ENCODE measurements at regions of chr1 and their contacts with region 1.

Region 1: DNA sequence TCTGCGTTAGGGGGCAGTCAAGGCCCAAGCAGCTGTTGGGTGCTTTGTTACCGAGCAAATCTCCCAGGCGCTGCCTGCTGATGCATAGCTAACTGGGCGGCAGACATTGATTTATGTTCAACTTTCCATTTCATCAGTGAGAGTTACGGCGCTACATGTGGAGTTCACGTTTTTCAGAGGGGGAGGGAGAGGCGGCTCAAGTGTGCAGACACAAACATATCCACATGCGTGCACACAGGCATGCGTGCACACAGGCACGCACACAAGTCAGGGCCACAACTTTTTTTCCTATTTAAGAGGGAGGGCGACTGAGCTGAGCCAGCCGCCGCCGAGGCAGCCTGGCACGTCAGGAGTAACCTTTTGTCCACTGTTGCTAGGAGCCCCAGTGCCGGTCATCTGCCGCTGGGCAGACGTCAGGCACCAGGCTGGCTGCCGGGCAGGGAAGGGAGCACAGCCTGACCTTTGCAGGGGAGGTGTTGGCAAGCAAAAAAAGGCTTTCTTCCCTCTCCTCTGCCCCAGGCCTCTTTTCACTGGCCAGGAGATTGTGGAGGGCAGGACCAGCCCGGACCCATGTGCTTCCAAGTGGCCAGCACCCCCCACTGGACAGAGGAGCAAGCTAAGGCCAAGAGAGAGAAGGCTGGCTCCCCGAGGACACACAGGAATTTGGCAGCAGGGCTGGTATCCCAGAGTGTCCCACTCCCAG is 73.3 kb downstream of the MRPL37 start:
- DNase-seq: peak; percentile 90 to 91
- ATAC-seq: peak; percentile 82
- H3K4me3 ChIP-seq: no peak overlapping the region
- H3K27ac ChIP-seq: peak overlapping the region; percentile 58 to 95
- H3K4me1 ChIP-seq: no peaks in the 10 kb centered on the region
- H3K27me3 ChIP-seq: no peaks in the 10 kb centered on the region

Region 2: GRCh38 chr1:54287176-54287650 is 14.0 kb after region 1 on chr1:
- intact Hi-C with region 1: loop called in 1 of 2 experiments (anchors 2 kb)
- DNase-seq: peak; percentile 90 to 93
- ATAC-seq: peak; percentile 88
- H3K4me3 ChIP-seq: no peak overlapping the region
- H3K27ac ChIP-seq: peak overlapping the region; percentile 29 to 92
- H3K4me1 ChIP-seq: peaks cover 10 to 15% of the 10 kb centered on the region in 2 donors
- H3K27me3 ChIP-seq: no peaks in the 10 kb centered on the region

Region 3: GRCh38 chr1:54335755-54336108 is 62.5 kb after region 1 on chr1:
- intact Hi-C with region 1: loop called in 1 of 2 experiments (anchors 2 kb)
- DNase-seq: peak; percentile 81 to 85
- ATAC-seq: peak; percentile 77
- H3K4me3 ChIP-seq: no peak overlapping the region
- H3K27ac ChIP-seq: peak overlapping the region; percentile 7 to 76
- H3K4me1 ChIP-seq: no peaks in the 10 kb centered on the region
- H3K27me3 ChIP-seq: no peaks in the 10 kb centered on the region

Region 4: GRCh38 chr1:54406339-54407153 is 133.3 kb after region 1 on chr1 and contains the start of gene SSBP3:
- intact Hi-C with region 1: loop called (anchors 1 to 2 kb)
- DNase-seq: peak; percentile 95 to 97
- ATAC-seq: peak; percentile 93
- H3K4me3 ChIP-seq: peak within 1 kb of the TSS; percentile 97 to 98
- H3K27ac ChIP-seq: peak within 1 kb of the TSS in 1 of 2 donors; percentile 83
- H3K4me1 ChIP-seq: peaks cover 3 to 5% of the 10 kb centered on the region in 2 donors
- H3K27me3 ChIP-seq: no peaks in the 10 kb centered on the region
- total RNA-seq, gene SSBP3: 73.8 to 83.4 TPM